H1 (cell line): ENCODE measurements at regions of chr10 and their contacts with region 1.

Region 1: GRCh38 chr10:119139464-119140067 is 25.9 kb downstream of the SFXN4 start:
- DNase-seq: peak; percentile 19 to 68
- H3K4me3 ChIP-seq: no peak overlapping the region
- H3K27ac ChIP-seq: no peak overlapping the region
- H3K4me1 ChIP-seq: no peaks in the 10 kb centered on the region
- H3K27me3 ChIP-seq: no peaks in the 10 kb centered on the region
- CTCF ChIP-seq: peak; percentile 66 to 96 (median 81)
- EP300 ChIP-seq: no peak
- POLR2A ChIP-seq: no peak
- RAD21 ChIP-seq: peak; percentile 80 to 81

Region 2: GRCh38 chr10:119153651-119154050 is 14.1 kb after region 1 on chr10:
- CTCF ChIA-PET with region 1: interaction called, 15 read pairs
- POLR2A ChIA-PET with region 1: interaction called, 4 read pairs
- DNase-seq: no peak
- H3K4me3 ChIP-seq: no peak overlapping the region
- H3K27ac ChIP-seq: no peak overlapping the region
- H3K4me1 ChIP-seq: no peaks in the 10 kb centered on the region
- H3K27me3 ChIP-seq: no peaks in the 10 kb centered on the region
- CTCF ChIP-seq: no peak
- EP300 ChIP-seq: no peak
- POLR2A ChIP-seq: no peak
- RAD21 ChIP-seq: no peak

Region 3: GRCh38 chr10:119189811-119190282 is 50.3 kb after region 1 on chr10:
- CTCF ChIA-PET with region 1: interaction called, 14 read pairs
- POLR2A ChIA-PET with region 1: no interaction called
- DNase-seq: no peak
- H3K4me3 ChIP-seq: no peak overlapping the region
- H3K27ac ChIP-seq: no peak overlapping the region
- H3K4me1 ChIP-seq: no peaks in the 10 kb centered on the region
- H3K27me3 ChIP-seq: no peaks in the 10 kb centered on the region
- CTCF ChIP-seq: no peak
- EP300 ChIP-seq: no peak
- POLR2A ChIP-seq: no peak
- RAD21 ChIP-seq: no peak